H1 (cell line): ENCODE measurements at regions of chr19 and their contacts with region 1.

Region 1: DNA sequence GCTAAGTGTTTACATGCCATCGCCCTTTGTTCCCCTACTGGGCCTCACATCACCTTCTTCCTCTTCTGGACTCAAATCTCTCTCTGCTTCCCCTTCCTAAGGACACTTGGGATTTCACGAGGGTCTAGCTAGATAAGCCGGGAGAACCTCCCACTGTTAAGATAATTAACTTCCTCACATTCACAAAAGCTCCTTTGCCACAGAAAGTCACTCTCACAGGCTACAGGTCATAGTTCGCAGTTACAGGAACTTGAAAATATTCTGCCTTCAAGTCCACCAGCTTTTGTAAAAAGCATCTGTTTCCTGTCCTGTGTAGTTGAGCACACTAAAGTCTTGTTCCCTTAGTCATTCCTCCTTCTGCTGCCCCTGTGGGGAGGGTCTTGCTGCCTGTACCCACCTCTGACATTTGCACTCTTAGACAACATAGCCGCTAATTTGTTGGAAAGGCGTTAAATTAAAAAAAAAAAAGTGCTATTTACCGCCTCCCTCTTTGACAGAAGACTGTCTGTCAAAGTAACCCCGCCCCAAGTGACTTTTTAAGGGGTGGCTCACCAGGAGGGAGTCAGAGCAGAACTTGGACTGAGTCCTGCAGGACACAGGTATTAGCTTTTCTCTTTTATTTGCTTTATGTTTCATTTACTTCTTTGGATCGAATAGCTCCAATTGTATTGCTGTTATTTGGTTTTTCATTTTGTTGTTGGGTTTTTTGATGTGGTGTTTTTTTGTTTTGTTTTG is 26.8 kb upstream of the CEACAM21 start:
- DNase-seq: no peak
- H3K4me3 ChIP-seq: peak overlapping the region in 2 of 4 experiments; percentile 5 to 36; a peak in 4 of 8 replicates
- H3K27ac ChIP-seq: no peak overlapping the region
- H3K4me1 ChIP-seq: peaks cover 0 to 5% (median 0%) of the 10 kb centered on the region in 4 experiments; a peak in 1 of 7 replicates
- H3K27me3 ChIP-seq: no peaks in the 10 kb centered on the region
- CTCF ChIP-seq: no peak
- EP300 ChIP-seq: no peak
- POLR2A ChIP-seq: no peak
- RAD21 ChIP-seq: no peak

Region 2: GRCh38 chr19:41449079-41449864 is 99.8 kb before region 1 on chr19:
- CTCF ChIA-PET with region 1: interaction called, 14 read pairs
- POLR2A ChIA-PET with region 1: no interaction called
- DNase-seq: peak; percentile 66 to 90
- H3K4me3 ChIP-seq: peak overlapping the region in 1 of 4 experiments; percentile 20; a peak in 1 of 8 replicates
- H3K27ac ChIP-seq: no peak overlapping the region
- H3K4me1 ChIP-seq: no peaks in the 10 kb centered on the region
- H3K27me3 ChIP-seq: 0 out of 7 replicates have a peak, but pooled peaks cover 0 to 3% (median 0%) of the 10 kb centered on the region in 4 experiments
- CTCF ChIP-seq: peak; percentile 96 to 98 (median 97)
- EP300 ChIP-seq: no peak
- POLR2A ChIP-seq: no peak
- RAD21 ChIP-seq: peak; percentile 86 to 93

Region 3: GRCh38 chr19:41521931-41522555 is 27.1 kb before region 1 on chr19:
- CTCF ChIA-PET with region 1: no interaction called
- POLR2A ChIA-PET with region 1: no interaction called
- DNase-seq: peak in 1 of 2 experiments; percentile 56
- H3K4me3 ChIP-seq: peak overlapping the region in 2 of 4 experiments; percentile 25 to 26; a peak in 3 of 8 replicates
- H3K27ac ChIP-seq: no peak overlapping the region
- H3K4me1 ChIP-seq: no peaks in the 10 kb centered on the region
- H3K27me3 ChIP-seq: peaks cover 0 to 22% (median 11%) of the 10 kb centered on the region in 4 experiments; a peak in 6 of 7 replicates
- CTCF ChIP-seq: no peak
- EP300 ChIP-seq: no peak
- POLR2A ChIP-seq: no peak
- RAD21 ChIP-seq: no peak

Region 4: GRCh38 chr19:41570639-41571112 is 21.6 kb after region 1 on chr19:
- CTCF ChIA-PET with region 1: interaction called, 34 read pairs
- POLR2A ChIA-PET with region 1: no interaction called
- DNase-seq: peak; percentile 50 to 84
- H3K4me3 ChIP-seq: no peak overlapping the region
- H3K27ac ChIP-seq: no peak overlapping the region
- H3K4me1 ChIP-seq: no peaks in the 10 kb centered on the region; a peak in 2 of 7 replicates
- H3K27me3 ChIP-seq: peaks cover 0 to 13% (median 4%) of the 10 kb centered on the region in 4 experiments; a peak in 3 of 7 replicates
- CTCF ChIP-seq: peak; percentile 86 to 93 (median 88)
- EP300 ChIP-seq: no peak
- POLR2A ChIP-seq: no peak
- RAD21 ChIP-seq: peak; percentile 89 to 93